ENCODE measurements at regions of chr7 and their contacts with region 1.

Region 1: DNA sequence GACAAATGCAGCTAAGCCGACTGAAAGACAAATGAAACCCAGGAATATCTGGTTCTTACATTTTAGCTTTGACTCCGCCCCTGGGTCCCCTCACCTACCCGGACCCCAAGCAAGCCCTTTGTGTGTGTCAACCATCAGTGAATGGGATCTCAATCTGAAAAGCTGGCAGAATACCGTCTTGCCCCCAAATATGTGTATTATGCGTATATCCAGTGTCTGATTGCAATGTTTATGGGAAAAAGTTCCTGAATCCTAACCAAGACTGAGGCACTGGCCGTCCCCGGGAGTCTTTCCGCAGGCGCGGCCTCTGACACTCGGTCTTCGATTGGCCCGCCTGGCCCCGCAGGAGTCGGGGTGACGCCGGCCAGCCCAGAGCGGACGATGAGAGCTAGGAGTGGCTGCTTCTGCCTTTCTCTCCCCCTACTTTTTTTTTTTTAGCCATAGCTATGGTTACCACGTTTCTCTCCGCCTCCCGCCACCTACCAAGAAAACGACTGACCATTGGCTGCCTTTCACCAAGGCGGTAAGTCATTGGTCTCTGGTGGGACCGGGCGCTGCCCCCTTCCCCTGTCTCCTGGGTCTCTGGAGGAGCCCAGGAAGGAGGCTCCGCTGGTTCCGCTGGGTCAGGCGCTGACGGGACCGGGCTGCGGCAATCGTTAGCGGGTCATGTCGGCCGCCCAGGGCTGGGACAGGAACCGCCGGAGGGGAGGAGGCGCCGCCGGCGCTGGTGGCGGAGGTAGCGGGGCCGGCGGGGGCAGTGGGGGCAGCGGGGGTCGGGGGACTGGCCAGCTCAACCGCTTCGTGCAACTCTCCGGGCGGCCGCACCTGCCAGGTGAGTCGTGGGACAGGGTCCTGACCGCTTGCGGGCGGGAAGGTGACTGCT is at the start of gene KLHDC10:
- DNase-seq: peak; percentile 99
- H3K4me3 ChIP-seq: peak within 1 kb of the TSS; percentile 80 to 98 (median 95)
- H3K27ac ChIP-seq: peak within 1 kb of the TSS; percentile 87 to 89 (median 88)
- H3K4me1 ChIP-seq: peaks cover 0 to 42% (median 31%) of the 10 kb centered on the region in 4 donors
- H3K27me3 ChIP-seq: no peaks in the 10 kb centered on the region
- CTCF ChIP-seq: no peak
- EP300 ChIP-seq: no peak
- POLR2A ChIP-seq: peak in 1 of 2 donors; percentile 32
- total RNA-seq, gene KLHDC10: 16.3 to 22.5 (median 17.8) TPM

Region 2: DNA sequence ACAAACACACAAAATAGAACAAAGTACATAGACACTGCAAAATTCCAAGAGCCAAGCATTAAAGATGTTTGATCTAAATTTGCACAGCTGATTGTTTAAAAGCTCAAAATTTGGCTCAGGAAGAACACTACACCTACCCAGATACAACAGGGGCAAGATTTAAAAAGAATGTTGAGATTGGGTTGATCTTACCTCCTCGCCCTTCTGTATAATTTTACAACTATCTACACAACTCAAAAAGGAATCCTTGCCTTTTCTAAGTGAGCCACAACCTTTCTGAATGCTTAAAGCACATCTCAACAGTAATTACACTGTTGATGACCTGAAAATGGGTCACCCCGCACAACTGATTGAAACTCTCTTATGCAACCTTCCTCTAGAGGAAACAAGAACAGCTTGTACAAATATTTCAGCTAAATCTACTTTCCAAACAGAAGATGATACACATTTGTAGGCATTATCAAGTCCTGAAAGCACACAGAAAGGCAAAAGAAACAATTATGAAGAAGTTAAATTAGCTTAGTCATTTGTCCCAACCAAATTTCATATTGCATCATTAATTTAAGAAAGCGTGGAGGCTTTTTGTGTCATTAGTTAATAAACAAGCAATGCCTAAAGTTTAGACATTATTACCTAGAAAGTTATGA is 192.9 kb before region 1 on chr7:
- intact Hi-C with region 1: no loop called
- DNase-seq: no peak
- H3K4me3 ChIP-seq: no peak overlapping the region
- H3K27ac ChIP-seq: peak overlapping the region; percentile 22 to 35 (median 26)
- H3K4me1 ChIP-seq: peaks cover 0 to 46% (median 26%) of the 10 kb centered on the region in 4 donors
- H3K27me3 ChIP-seq: no peaks in the 10 kb centered on the region
- CTCF ChIP-seq: no peak
- EP300 ChIP-seq: no peak
- POLR2A ChIP-seq: no peak

Region 3: GRCh38 chr7:129969807-129970446 is 100.3 kb before region 1 on chr7:
- intact Hi-C with region 1: no loop called
- DNase-seq: no peak
- H3K4me3 ChIP-seq: no peak overlapping the region
- H3K27ac ChIP-seq: peak overlapping the region in 2 of 4 donors; percentile 50 to 73
- H3K4me1 ChIP-seq: peaks cover 0 to 7% (median 3%) of the 10 kb centered on the region in 4 donors
- H3K27me3 ChIP-seq: no peaks in the 10 kb centered on the region
- CTCF ChIP-seq: no peak
- EP300 ChIP-seq: no peak
- POLR2A ChIP-seq: no peak

Region 4: GRCh38 chr7:130096243-130096827 is 26.1 kb after region 1 on chr7:
- intact Hi-C with region 1: no loop called
- DNase-seq: no peak
- H3K4me3 ChIP-seq: no peak overlapping the region
- H3K27ac ChIP-seq: no peak overlapping the region
- H3K4me1 ChIP-seq: peaks cover 0 to 10% (median 3%) of the 10 kb centered on the region in 4 donors
- H3K27me3 ChIP-seq: no peaks in the 10 kb centered on the region
- CTCF ChIP-seq: peak in 1 of 4 experiments; percentile 13
- EP300 ChIP-seq: no peak
- POLR2A ChIP-seq: no peak

Region 5: GRCh38 chr7:130205084-130205947 is 135.1 kb after region 1 on chr7 and contains the start of gene TMEM209:
- intact Hi-C with region 1: loop called (anchors 5 kb)
- DNase-seq: peak; percentile 97
- H3K4me3 ChIP-seq: peak within 1 kb of the TSS; percentile 71 to 87 (median 80)
- H3K27ac ChIP-seq: peak within 1 kb of the TSS; percentile 88 to 93 (median 92)
- H3K4me1 ChIP-seq: peaks cover 0 to 12% (median 6%) of the 10 kb centered on the region in 4 donors
- H3K27me3 ChIP-seq: no peaks in the 10 kb centered on the region
- CTCF ChIP-seq: no peak
- EP300 ChIP-seq: peak in 1 of 4 donors; percentile 42
- POLR2A ChIP-seq: peak; percentile 55 to 60
- total RNA-seq, gene TMEM209: 6.5 to 9.6 (median 8.9) TPM

Region 6: GRCh38 chr7:130721486-130722280 is 651.5 kb after region 1 on chr7:
- intact Hi-C with region 1: loop called (anchors 10 kb)
- DNase-seq: peak; percentile 72
- H3K4me3 ChIP-seq: no peak overlapping the region
- H3K27ac ChIP-seq: no peak overlapping the region
- H3K4me1 ChIP-seq: no peaks in the 10 kb centered on the region
- H3K27me3 ChIP-seq: no peaks in the 10 kb centered on the region
- CTCF ChIP-seq: peak in 3 of 4 experiments; percentile 33 to 51 (median 33)
- EP300 ChIP-seq: no peak
- POLR2A ChIP-seq: no peak

Region 7: GRCh38 chr7:130758429-130759056 is 688.3 kb after region 1 on chr7:
- intact Hi-C with region 1: loop called (anchors 5 kb)
- DNase-seq: no peak
- H3K4me3 ChIP-seq: no peak overlapping the region
- H3K27ac ChIP-seq: no peak overlapping the region
- H3K4me1 ChIP-seq: no peaks in the 10 kb centered on the region
- H3K27me3 ChIP-seq: no peaks in the 10 kb centered on the region
- CTCF ChIP-seq: peak in 3 of 4 experiments; percentile 23 to 61 (median 33)
- EP300 ChIP-seq: no peak
- POLR2A ChIP-seq: no peak

Region 8: DNA sequence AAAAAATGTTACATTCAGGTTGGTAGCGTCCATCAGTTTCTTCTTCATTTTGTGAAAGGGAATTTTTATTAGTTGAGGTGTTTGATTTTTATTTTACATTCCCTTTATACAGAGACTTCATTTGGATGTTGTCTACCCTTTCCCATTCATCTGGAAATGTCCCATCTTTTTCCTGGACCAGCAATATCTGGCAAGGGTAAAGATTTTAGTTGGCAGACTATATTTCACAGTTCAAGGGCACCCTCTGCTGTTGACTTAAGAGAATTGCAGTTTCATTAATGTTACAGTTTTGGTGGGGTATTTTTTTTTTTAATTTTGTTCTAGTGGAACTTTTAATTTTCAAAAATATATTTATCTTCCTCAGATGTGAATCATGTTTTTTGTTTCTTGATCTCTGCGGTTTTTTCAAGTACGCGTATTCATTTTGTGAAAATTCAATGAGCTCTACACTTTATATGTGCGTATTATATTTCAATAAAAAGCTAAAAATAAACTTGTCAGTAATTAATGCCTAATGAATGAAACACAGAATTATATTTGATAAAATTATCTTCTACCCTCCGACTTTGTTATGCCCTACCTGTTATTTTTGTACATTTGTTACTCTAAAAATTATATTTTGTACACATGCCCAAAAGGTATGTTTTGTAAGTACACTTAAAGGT is 761.7 kb after region 1 on chr7:
- intact Hi-C with region 1: loop called (anchors 2 kb)
- DNase-seq: no peak
- H3K4me3 ChIP-seq: no peak overlapping the region
- H3K27ac ChIP-seq: no peak overlapping the region
- H3K4me1 ChIP-seq: no peaks in the 10 kb centered on the region
- H3K27me3 ChIP-seq: no peaks in the 10 kb centered on the region
- CTCF ChIP-seq: peak in 3 of 4 experiments; percentile 53 to 76 (median 54)
- EP300 ChIP-seq: no peak
- POLR2A ChIP-seq: no peak

Measured in sigmoid colon (tissue), 7 donors.